Dorsolateral prefrontal cortex (tissue), 120 donors: ENCODE measurements at regions of chr15 and their contacts with region 1.

Region 1: GRCh38 chr15:64153480-64154367 is 2.2 kb downstream of the SNX22 start:
- DNase-seq: peak; percentile 91 to 95 (median 92)
- H3K4me3 ChIP-seq: peak overlapping the region in 56 of 59 donors; percentile 5 to 86 (median 70)
- H3K27ac ChIP-seq: peak overlapping the region in 57 of 59 donors; percentile 1 to 96 (median 80)
- H3K27me3 ChIP-seq: peaks cover 0 to 19% (median 5%) of the 10 kb centered on the region in 45 donors
- CTCF ChIP-seq: peak; percentile 80 to 99 (median 97)

Region 2: GRCh38 chr15:64093627-64094417 is 59.9 kb before region 1 on chr15 and contains the start of gene CIAO2A:
- intact Hi-C with region 1: loop called (anchors 2 kb)
- DNase-seq: peak; percentile 83 to 97 (median 96)
- H3K4me3 ChIP-seq: peak within 1 kb of the TSS; percentile 51 to 99 (median 83)
- H3K27ac ChIP-seq: peak within 1 kb of the TSS; percentile 79 to 98 (median 94)
- H3K27me3 ChIP-seq: no peaks in the 10 kb centered on the region
- CTCF ChIP-seq: peak in 26 of 56 donors; percentile 3 to 55 (median 20)
- total RNA-seq, gene CIAO2A: 13.7 to 37.5 (median 22.9) TPM